Naive thymus-derived CD8-positive, alpha-beta T cell (primary cell): ENCODE measurements at regions of chr3 and their contacts with region 1.

Region 1: DNA sequence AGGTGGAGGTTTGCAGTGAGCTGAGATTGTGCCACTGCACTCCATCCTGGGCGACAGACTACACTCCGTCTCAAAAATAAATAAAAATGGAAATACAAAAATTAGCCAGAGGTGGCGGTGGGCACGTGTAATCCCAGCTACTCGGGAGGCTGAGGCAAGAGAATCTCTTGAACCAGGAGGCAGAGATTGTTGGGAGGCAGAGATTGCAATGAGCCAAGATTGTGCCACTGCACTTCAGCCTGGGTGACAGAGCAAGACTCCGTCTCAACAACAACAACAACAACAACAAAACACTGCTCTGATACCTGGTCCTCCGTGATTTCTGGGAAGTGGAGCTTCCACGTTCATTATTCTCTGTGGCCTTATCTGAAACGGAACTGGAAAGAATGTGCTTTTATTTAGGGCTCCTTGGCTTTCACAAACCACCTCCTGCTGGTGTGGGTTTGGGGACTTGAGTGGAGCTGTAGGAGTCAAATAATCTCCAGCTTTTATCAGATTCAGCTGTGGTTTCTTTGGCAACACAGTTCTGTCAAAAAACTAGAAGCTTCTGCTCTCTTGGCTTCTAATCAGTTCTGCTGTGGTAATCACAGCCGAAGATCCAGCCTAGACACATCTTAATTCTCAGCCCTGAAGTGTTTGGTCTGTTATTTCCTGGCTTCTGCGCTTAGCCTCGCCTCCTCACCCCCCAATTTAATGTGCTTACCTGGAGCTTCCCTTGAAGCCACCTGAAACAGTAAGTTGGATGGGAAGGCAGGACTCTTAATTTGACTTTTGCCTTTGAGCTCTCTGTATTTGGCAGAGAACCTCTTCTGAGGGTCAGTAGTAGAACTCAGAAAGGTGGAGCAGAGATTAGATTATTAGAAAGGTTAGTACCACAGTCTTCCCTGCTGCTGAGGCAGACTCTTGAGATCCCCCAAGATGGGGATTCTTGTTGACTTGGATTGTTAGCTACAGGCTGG is 21.4 kb downstream of the IRAK2 start:
- DNase-seq: peak in 4 of 10 donors; percentile 3 to 37 (median 30)
- ATAC-seq: peak; percentile 82 to 87
- H3K4me3 Mint-ChIP-seq: peak overlapping the region; percentile 12 to 75 (median 62)
- H3K27ac Mint-ChIP-seq: peak overlapping the region; percentile 29 to 96 (median 92)
- H3K4me1 Mint-ChIP-seq: peaks cover 27 to 74% (median 57%) of the 10 kb centered on the region in 4 donors
- H3K27me3 Mint-ChIP-seq: no peaks in the 10 kb centered on the region

Region 2: DNA sequence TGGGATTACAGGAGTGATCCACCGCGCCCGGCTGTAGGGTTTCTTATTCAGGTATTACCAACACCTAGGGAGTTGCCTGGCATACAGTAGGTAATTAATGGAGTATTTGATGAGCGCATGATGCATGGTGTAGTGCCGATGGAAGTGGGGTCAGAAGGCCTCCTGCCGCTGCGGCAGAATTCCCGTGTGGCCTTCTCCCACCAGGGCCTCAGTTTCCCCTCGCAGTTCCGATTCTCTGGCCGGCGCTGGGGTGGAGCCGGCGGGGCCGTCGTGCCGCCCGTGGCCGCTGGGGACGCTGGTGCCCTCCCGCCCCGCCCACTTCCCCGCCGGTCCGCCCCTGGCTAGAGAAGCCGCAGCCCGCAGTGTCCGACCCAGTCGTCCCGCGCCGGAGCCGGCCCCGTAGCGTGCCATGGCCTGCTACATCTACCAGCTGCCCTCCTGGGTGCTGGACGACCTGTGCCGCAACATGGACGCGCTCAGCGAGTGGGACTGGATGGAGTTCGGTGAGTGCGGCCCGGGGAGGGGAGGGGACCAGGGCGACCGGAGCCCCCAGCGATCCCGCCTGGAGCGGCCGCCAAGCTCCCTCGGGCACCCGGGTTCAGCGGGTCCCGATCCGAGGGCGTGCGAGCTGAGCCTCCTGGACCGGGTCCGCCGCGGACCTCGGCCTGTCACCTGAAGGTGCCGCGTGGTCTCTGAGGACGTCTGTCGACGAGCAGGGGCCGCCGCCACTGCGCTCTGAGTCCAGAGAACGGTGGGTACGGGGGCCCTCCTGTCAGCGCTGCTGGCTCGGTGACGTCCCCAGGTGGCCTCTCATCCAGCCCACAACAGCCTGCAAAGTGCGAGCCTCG is 21.3 kb before region 1 on chr3 and contains the start of gene IRAK2:
- POLR2A ChIA-PET with region 1: interaction called, 20 read pairs
- DNase-seq: peak; percentile 11 to 74 (median 60)
- ATAC-seq: peak; percentile 80 to 85
- H3K4me3 Mint-ChIP-seq: peak within 1 kb of the TSS; percentile 71 to 95 (median 84)
- H3K27ac Mint-ChIP-seq: peak within 1 kb of the TSS in 9 of 10 donors; percentile 54 to 86 (median 69)
- H3K4me1 Mint-ChIP-seq: peaks cover 5 to 31% (median 17%) of the 10 kb centered on the region in 4 donors
- H3K27me3 Mint-ChIP-seq: no peaks in the 10 kb centered on the region
- polyA plus RNA-seq, gene IRAK2: 2.9 to 6.0 (median 5.1) TPM